ENCODE measurements at regions of chr4 and their contacts with region 1.

Region 1: DNA sequence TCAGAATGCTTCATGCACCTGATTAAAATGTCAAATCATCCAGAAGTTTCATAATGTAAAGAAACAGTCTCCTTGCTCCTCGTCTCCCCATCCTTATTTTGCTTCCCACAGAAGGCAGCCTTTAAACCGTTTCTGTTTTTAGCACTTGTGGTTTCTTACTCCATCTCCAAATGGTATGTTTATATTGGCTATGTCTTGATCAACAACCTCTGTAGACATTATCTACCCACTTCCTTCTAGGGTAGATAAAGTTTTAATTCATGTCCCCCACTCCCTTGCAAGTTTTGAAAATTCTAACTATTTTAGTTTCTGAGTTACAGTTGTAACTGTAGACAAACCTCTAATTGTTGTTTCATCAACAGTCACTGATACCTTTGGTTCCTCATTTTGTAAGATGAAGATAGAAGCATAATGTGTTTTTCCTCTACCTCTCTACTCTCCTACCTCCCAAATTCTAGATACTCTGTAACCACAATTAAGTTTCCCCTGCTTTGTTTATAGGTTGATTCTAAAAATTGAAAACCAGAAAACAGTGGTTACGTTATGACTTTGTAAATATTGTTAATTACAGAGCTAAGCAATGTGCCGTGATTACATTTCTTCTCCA is 291.7 kb upstream of the GATB start:
- DNase-seq: no peak
- ATAC-seq: no peak
- H3K4me3 ChIP-seq: no peak overlapping the region
- H3K27ac ChIP-seq: no peak overlapping the region
- H3K4me1 ChIP-seq: no peaks in the 10 kb centered on the region
- H3K27me3 ChIP-seq: no peaks in the 10 kb centered on the region
- CTCF ChIP-seq: no peak

Region 2: GRCh38 chr4:151824656-151825055 is 227.9 kb before region 1 on chr4:
- intact Hi-C with region 1: no loop called
- DNase-seq: no peak
- ATAC-seq: no peak
- H3K4me3 ChIP-seq: no peak overlapping the region
- H3K27ac ChIP-seq: no peak overlapping the region
- H3K4me1 ChIP-seq: no peaks in the 10 kb centered on the region
- H3K27me3 ChIP-seq: no peaks in the 10 kb centered on the region
- CTCF ChIP-seq: no peak

Region 3: GRCh38 chr4:152166567-152166966 is 114.0 kb after region 1 on chr4:
- intact Hi-C with region 1: loop called in 1 of 10 experiments (anchors 10 kb)
- DNase-seq: no peak
- ATAC-seq: no peak
- H3K4me3 ChIP-seq: no peak overlapping the region
- H3K27ac ChIP-seq: no peak overlapping the region
- H3K4me1 ChIP-seq: peaks cover 5 to 14% (median 12%) of the 10 kb centered on the region in 9 donors
- H3K27me3 ChIP-seq: no peaks in the 10 kb centered on the region
- CTCF ChIP-seq: no peak

Measured in heart right ventricle (tissue), 16 donors.